Dorsolateral prefrontal cortex (tissue), 120 donors: ENCODE measurements at regions of chr2 and their contacts with region 1.

Region 1: GRCh38 chr2:182980115-182980514 is 58.1 kb downstream of the NCKAP1 start:
- DNase-seq: no peak
- H3K4me3 ChIP-seq: no peak overlapping the region
- H3K27ac ChIP-seq: peak overlapping the region in 1 of 59 donors; percentile 33
- H3K27me3 ChIP-seq: no peaks in the 10 kb centered on the region
- CTCF ChIP-seq: peak; percentile 53 to 96 (median 72)

Region 2: GRCh38 chr2:182763311-182763912 is 216.7 kb before region 1 on chr2:
- intact Hi-C with region 1: loop called (anchors 2 to 10 kb)
- DNase-seq: peak in 1 of 10 donors; percentile 4
- H3K4me3 ChIP-seq: no peak overlapping the region
- H3K27ac ChIP-seq: no peak overlapping the region
- H3K27me3 ChIP-seq: no peaks in the 10 kb centered on the region
- CTCF ChIP-seq: peak in 55 of 56 donors; percentile 15 to 67 (median 48)

Region 3: DNA sequence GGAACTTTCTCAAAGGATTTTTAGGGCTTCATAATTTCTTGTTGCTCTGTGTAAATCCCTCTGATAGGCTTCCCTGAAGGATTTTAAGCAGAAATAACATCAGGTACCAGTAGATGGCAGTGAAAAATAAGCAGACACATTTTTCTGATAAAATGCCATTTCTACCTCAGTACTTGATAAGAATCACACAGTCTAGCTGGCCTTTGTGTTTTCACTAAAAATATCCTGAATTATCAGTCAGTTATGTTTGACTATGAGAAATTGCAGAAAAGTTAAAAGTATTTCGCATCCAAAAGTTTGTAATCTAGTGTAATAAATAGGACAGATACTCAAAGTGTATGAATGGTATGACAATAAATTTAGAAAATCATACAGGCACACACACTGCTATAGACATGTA is 195.3 kb before region 1 on chr2:
- intact Hi-C with region 1: loop called in 1 of 2 experiments (anchors 10 kb)
- DNase-seq: no peak
- H3K4me3 ChIP-seq: no peak overlapping the region
- H3K27ac ChIP-seq: no peak overlapping the region
- H3K27me3 ChIP-seq: no peaks in the 10 kb centered on the region
- CTCF ChIP-seq: peak; percentile 21 to 79 (median 58)